Activated B cell treated with CpG ODN at 0.5 μM for 24 hours (primary cell): ENCODE measurements at regions of chr18 and their contacts with region 1.

Region 1: GRCh38 chr18:27964811-27965210 is 212.1 kb downstream of the CDH2 start:
- DNase-seq: no peak
- ATAC-seq: no peak
- H3K4me3 Mint-ChIP-seq: no peak overlapping the region
- H3K27ac Mint-ChIP-seq: no peak overlapping the region
- H3K4me1 Mint-ChIP-seq: no peaks in the 10 kb centered on the region
- H3K27me3 Mint-ChIP-seq: no peaks in the 10 kb centered on the region
- CTCF ChIP-seq: no peak

Region 2: DNA sequence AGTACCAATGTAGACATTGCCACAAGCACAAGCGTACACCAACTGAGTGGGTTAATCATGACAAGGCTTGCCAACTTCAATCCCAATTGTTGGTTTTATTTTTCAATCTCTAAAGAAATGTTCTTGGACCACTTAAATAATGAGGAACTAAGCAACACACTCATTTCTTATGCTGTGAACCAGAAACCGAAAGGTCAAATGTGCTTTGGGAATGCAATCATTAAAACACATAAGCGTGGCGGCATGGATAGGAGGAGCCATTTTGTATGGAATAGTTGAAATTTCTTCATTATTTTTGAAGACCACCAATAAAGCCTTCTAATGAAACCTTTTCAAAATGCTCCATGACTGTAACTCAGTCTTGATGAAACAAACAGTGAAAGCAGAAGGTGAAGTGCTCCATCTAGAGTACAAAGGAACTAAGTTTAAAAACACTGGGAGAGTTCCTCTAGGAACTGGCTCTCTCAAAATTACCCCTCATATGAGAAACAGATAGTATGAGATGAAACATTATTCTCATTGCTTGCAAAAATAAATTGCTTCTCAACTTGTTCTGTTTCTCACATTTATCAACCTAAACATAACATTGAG is 666.5 kb before region 1 on chr18:
- CTCF ChIA-PET with region 1: no interaction called
- POLR2A ChIA-PET with region 1: no interaction called
- intact Hi-C with region 1: no loop called
- DNase-seq: no peak
- ATAC-seq: no peak
- H3K4me3 Mint-ChIP-seq: no peak overlapping the region
- H3K27ac Mint-ChIP-seq: no peak overlapping the region
- H3K4me1 Mint-ChIP-seq: no peaks in the 10 kb centered on the region
- H3K27me3 Mint-ChIP-seq: no peaks in the 10 kb centered on the region
- CTCF ChIP-seq: no peak

Region 3: GRCh38 chr18:27685807-27686412 is 278.9 kb before region 1 on chr18:
- CTCF ChIA-PET with region 1: no interaction called
- POLR2A ChIA-PET with region 1: no interaction called
- intact Hi-C with region 1: no loop called
- DNase-seq: no peak
- ATAC-seq: no peak
- H3K4me3 Mint-ChIP-seq: no peak overlapping the region
- H3K27ac Mint-ChIP-seq: no peak overlapping the region
- H3K4me1 Mint-ChIP-seq: no peaks in the 10 kb centered on the region
- H3K27me3 Mint-ChIP-seq: no peaks in the 10 kb centered on the region
- CTCF ChIP-seq: no peak

Region 4: DNA sequence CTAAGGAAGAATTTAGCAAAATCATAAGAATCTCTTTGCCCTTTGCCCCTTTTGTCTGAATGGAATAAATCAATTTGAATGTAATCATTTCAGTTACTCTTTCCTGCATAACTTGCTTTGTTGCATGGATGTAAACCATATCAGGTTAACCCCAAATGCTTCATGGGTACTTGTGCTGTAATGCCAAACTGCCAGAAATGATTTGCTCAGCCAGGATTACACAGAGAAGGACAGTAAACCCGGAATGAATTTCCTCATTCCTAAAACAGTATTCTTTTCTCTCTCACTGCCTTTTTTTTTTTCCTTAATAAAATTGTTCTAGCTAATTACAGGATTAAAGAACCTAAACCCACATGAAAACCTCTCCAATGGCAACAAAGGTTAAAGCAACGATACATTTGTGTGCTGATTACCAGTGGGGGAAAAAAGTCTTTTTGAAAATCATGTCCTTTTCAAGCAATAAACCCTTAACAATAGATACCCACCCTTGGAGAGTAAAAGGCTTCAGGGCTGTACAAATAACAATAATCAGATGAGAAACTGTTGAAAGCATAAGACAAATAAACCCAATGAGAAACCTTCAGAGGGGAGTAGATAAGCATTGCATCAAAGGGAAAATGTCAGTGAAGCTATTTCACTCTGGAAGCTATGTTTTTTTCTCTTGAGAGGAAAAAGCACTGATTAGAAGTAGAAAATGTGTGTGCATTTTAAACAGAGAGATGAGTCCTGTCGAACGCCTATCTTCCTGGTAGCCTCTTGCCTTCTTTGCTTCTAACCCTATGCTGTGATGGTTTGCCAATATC is 63.2 kb before region 1 on chr18:
- CTCF ChIA-PET with region 1: no interaction called
- POLR2A ChIA-PET with region 1: no interaction called
- intact Hi-C with region 1: loop called (anchors 10 kb)
- DNase-seq: no peak
- ATAC-seq: no peak
- H3K4me3 Mint-ChIP-seq: no peak overlapping the region
- H3K27ac Mint-ChIP-seq: no peak overlapping the region
- H3K4me1 Mint-ChIP-seq: no peaks in the 10 kb centered on the region
- H3K27me3 Mint-ChIP-seq: no peaks in the 10 kb centered on the region
- CTCF ChIP-seq: no peak

Region 5: DNA sequence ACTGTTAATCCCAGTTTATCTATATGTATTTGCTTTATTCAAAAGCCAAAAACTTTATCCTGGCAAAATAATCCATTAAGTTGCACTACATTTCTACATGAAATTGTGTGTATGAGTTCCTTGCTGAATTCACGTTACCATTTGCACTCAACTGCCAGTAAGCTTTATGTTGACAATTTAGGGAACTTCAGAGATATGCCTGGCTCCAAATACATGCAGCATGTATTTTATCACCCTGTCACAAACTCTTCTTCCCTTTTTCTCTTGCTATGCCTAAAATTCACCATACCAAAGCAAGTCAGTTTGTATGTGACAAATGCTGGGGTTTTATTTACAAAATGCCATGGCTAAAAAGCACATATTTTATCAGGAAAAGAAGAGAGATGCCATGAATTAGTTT is 369.7 kb after region 1 on chr18:
- CTCF ChIA-PET with region 1: no interaction called
- POLR2A ChIA-PET with region 1: no interaction called
- intact Hi-C with region 1: no loop called
- DNase-seq: no peak
- ATAC-seq: no peak
- H3K4me3 Mint-ChIP-seq: no peak overlapping the region
- H3K27ac Mint-ChIP-seq: no peak overlapping the region
- H3K4me1 Mint-ChIP-seq: no peaks in the 10 kb centered on the region
- H3K27me3 Mint-ChIP-seq: no peaks in the 10 kb centered on the region
- CTCF ChIP-seq: no peak